Activated T-helper 1 cell treated with anti-CD3 and anti-CD28 coated beads, Interleukin-12 subunit alpha, Interleukin-12 subunit beta, Interleukin-2, Interleukin-4 antibody, amounts not matched to agents 30 ng/mL and 10 ng/mL and 1 ng/mL, durations not matched to agents 14 hours and 24 hours and 36 hours (primary cell): ENCODE measurements at regions of chr11 and their contacts with region 1.

Region 1: GRCh38 chr11:1546536-1547400 is 25.3 kb downstream of the DUSP8 start:
- DNase-seq: no peak
- H3K4me3 Mint-ChIP-seq: no peak overlapping the region
- H3K27ac Mint-ChIP-seq: no peak overlapping the region
- H3K4me1 Mint-ChIP-seq: no peaks in the 10 kb centered on the region
- H3K27me3 Mint-ChIP-seq: peaks cover 30% of the 10 kb centered on the region

Region 2: DNA sequence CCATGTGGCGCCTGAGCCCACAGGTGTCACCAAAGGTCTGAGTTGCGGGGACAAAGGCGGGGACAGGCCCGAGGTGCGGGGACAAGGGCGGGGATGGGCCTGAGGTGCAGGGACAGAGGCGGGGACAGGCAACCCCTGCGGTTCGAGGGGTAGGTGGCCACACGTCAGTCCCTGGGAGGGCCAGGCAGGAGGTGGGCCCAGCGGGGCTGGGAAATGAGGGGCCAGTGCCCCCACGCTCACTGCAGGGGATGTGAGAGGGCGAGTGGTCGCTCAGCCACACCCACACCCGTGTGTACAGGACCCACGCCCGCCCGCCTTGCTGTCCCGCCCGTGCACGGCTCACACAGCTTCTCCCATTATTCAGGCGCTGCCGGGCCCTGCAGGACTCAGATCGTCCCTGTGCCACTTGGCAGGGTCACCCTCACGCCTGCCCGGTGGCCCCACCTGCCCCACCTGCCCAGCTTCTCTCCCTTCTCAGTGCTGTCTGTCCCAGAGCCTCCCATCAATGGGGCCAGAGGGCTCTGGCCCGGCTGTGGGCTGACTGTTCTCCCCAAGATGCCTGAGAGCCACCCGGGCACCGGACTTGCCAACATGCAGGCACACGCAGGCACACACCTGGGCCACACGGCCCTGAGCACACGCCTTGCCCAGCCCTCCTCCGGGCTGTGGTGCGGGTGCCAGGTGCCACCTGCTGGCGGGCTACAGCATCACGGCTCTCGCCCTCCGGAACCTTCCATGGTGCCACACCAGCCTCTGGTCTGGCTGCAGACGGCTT is 496.0 kb before region 1 on chr11:
- intact Hi-C with region 1: no loop called
- DNase-seq: peak; percentile 63
- H3K4me3 Mint-ChIP-seq: no peak overlapping the region
- H3K27ac Mint-ChIP-seq: no peak overlapping the region
- H3K4me1 Mint-ChIP-seq: no peaks in the 10 kb centered on the region
- H3K27me3 Mint-ChIP-seq: peaks cover 8% of the 10 kb centered on the region

Region 3: GRCh38 chr11:1121813-1122663 is 424.7 kb before region 1 on chr11:
- intact Hi-C with region 1: no loop called
- DNase-seq: no peak
- H3K4me3 Mint-ChIP-seq: no peak overlapping the region
- H3K27ac Mint-ChIP-seq: no peak overlapping the region
- H3K4me1 Mint-ChIP-seq: no peaks in the 10 kb centered on the region
- H3K27me3 Mint-ChIP-seq: no peaks in the 10 kb centered on the region

Region 4: GRCh38 chr11:1628506-1629325 is 81.9 kb after region 1 on chr11:
- intact Hi-C with region 1: loop called (anchors 10 kb)
- DNase-seq: peak; percentile 34
- H3K4me3 Mint-ChIP-seq: no peak overlapping the region
- H3K27ac Mint-ChIP-seq: no peak overlapping the region
- H3K4me1 Mint-ChIP-seq: peaks cover 4% of the 10 kb centered on the region
- H3K27me3 Mint-ChIP-seq: peaks cover 15% of the 10 kb centered on the region